CD8-positive, alpha-beta T cell (primary cell): ENCODE measurements at regions of chr13 and their contacts with region 1.

Region 1: GRCh38 chr13:26045142-26045541 is 6.7 kb downstream of the SHISA2 start:
- DNase-seq: peak in 1 of 9 experiments; percentile 30
- ATAC-seq: peak; percentile 54
- H3K4me3 ChIP-seq: no peak overlapping the region
- H3K4me3 Mint-ChIP-seq: no peak overlapping the region
- H3K27ac ChIP-seq: no peak overlapping the region
- H3K27ac Mint-ChIP-seq: peak overlapping the region; percentile 53
- H3K4me1 ChIP-seq: peaks cover 23% of the 10 kb centered on the region
- H3K4me1 Mint-ChIP-seq: peaks cover 28% of the 10 kb centered on the region
- H3K27me3 ChIP-seq: peaks cover 3 to 4% of the 10 kb centered on the region in 2 experiments
- H3K27me3 Mint-ChIP-seq: peaks cover 9% of the 10 kb centered on the region
- CTCF ChIP-seq: no peak

Region 2: DNA sequence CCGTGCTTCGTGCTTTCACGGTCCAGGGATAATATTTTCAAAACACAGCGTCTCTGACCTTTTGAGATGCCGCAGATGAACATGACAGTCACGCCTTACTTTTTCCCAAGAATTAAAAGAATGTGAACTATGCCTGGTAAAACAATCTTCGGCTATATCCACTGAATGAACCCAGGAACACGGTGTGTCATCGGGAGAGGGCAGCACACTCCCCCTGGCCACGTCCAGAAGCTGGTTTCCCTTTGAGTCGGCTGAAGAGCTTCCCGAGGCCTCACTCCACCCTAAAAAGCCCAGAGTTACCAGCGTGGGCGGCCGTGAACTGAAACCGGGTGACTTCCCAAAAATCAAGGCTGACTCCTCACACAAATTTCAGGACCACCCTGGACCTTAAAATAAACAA is 29.6 kb after region 1 on chr13:
- CTCF ChIA-PET with region 1: no interaction called
- POLR2A ChIA-PET with region 1: no interaction called
- intact Hi-C with region 1: loop called in 1 of 2 experiments (anchors 1 kb)
- DNase-seq: no peak
- ATAC-seq: no peak
- H3K4me3 ChIP-seq: no peak overlapping the region
- H3K4me3 Mint-ChIP-seq: no peak overlapping the region
- H3K27ac ChIP-seq: no peak overlapping the region
- H3K27ac Mint-ChIP-seq: no peak overlapping the region
- H3K4me1 ChIP-seq: no peaks in the 10 kb centered on the region
- H3K4me1 Mint-ChIP-seq: no peaks in the 10 kb centered on the region
- H3K27me3 ChIP-seq: no peaks in the 10 kb centered on the region
- H3K27me3 Mint-ChIP-seq: peaks cover 29% of the 10 kb centered on the region
- CTCF ChIP-seq: no peak

Region 3: GRCh38 chr13:26946684-26947343 is 901.7 kb after region 1 on chr13:
- CTCF ChIA-PET with region 1: no interaction called
- POLR2A ChIA-PET with region 1: no interaction called
- intact Hi-C with region 1: no loop called
- DNase-seq: peak in 2 of 9 experiments; percentile 43 to 56
- ATAC-seq: peak; percentile 57
- H3K4me3 ChIP-seq: no peak overlapping the region
- H3K4me3 Mint-ChIP-seq: no peak overlapping the region
- H3K27ac ChIP-seq: no peak overlapping the region
- H3K27ac Mint-ChIP-seq: no peak overlapping the region
- H3K4me1 ChIP-seq: no peaks in the 10 kb centered on the region
- H3K4me1 Mint-ChIP-seq: no peaks in the 10 kb centered on the region
- H3K27me3 ChIP-seq: no peaks in the 10 kb centered on the region
- H3K27me3 Mint-ChIP-seq: peaks cover 4% of the 10 kb centered on the region
- CTCF ChIP-seq: peak; percentile 13